ENCODE measurements at regions of chr17 and their contacts with region 1.

Region 1: GRCh38 chr17:69335058-69335457 is 8.1 kb upstream of the ABCA5 start:
- DNase-seq: no peak
- H3K4me3 Mint-ChIP-seq: no peak overlapping the region
- H3K27ac Mint-ChIP-seq: no peak overlapping the region
- H3K4me1 Mint-ChIP-seq: no peaks in the 10 kb centered on the region
- H3K27me3 Mint-ChIP-seq: peaks cover 18% of the 10 kb centered on the region

Region 2: GRCh38 chr17:69388822-69389442 is 53.9 kb after region 1 on chr17:
- intact Hi-C with region 1: loop called (anchors 2 kb)
- DNase-seq: no peak
- H3K4me3 Mint-ChIP-seq: no peak overlapping the region
- H3K27ac Mint-ChIP-seq: no peak overlapping the region
- H3K4me1 Mint-ChIP-seq: no peaks in the 10 kb centered on the region
- H3K27me3 Mint-ChIP-seq: peaks cover 3% of the 10 kb centered on the region

Measured in activated T-helper 1 cell treated with anti-CD3 and anti-CD28 coated beads, Interleukin-12 subunit alpha, Interleukin-12 subunit beta, Interleukin-2, Interleukin-4 antibody, amounts not matched to agents 30 ng/mL and 10 ng/mL and 1 ng/mL, durations not matched to agents 14 hours and 24 hours and 36 hours (primary cell).